ENCODE measurements at regions of chr5 and their contacts with region 1.

Region 1: GRCh38 chr5:181223058-181223728 is at the start of gene TRIM41:
- DNase-seq: peak; percentile 100
- ATAC-seq: peak; percentile 90
- total RNA-seq, gene TRIM41: 17.1 to 19.1 TPM

Region 2: GRCh38 chr5:180990086-180990881 is 232.9 kb before region 1 on chr5:
- intact Hi-C with region 1: no loop called
- DNase-seq: no peak
- ATAC-seq: no peak

Region 3: GRCh38 chr5:181243512-181244343 is 20.5 kb after region 1 on chr5 and contains the start of gene RACK1:
- intact Hi-C with region 1: loop called in 1 of 2 experiments (anchors 2 kb)
- DNase-seq: peak; percentile 92
- ATAC-seq: peak; percentile 66 to 68
- total RNA-seq, gene RACK1: 713 to 792 TPM